ENCODE measurements at regions of chr1 and their contacts with region 1.

Region 1: DNA sequence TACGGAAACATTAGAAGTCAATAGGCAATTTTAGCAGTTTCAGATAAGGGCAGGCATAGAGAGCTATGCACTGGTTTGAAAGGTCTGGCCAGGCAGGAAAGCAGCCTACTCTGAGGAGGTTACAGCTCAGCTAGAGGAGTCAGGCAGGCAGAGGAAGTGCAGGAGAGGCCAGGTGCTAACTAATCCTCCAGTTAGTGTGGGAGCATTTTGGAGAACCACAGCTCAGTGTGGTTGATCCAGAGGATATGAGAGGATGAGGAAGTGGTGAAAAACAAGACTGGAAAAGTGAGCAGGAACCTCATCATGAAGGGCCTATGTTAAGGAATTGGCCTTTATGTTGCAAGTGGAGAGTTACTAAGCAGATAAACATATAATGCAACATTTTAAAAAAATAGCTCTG is 282.4 kb upstream of the SGIP1 start:
- DNase-seq: no peak
- H3K4me3 Mint-ChIP-seq: no peak overlapping the region
- H3K27ac Mint-ChIP-seq: peak overlapping the region; percentile 7
- H3K4me1 Mint-ChIP-seq: peaks cover 72% of the 10 kb centered on the region
- H3K27me3 Mint-ChIP-seq: no peaks in the 10 kb centered on the region

Region 2: GRCh38 chr1:66436378-66437145 is 185.0 kb after region 1 on chr1:
- CTCF ChIA-PET with region 1: interaction called, 21 read pairs
- POLR2A ChIA-PET with region 1: no interaction called
- DNase-seq: peak; percentile 43
- H3K4me3 Mint-ChIP-seq: no peak overlapping the region
- H3K27ac Mint-ChIP-seq: peak overlapping the region; percentile 76
- H3K4me1 Mint-ChIP-seq: peaks cover 38% of the 10 kb centered on the region
- H3K27me3 Mint-ChIP-seq: no peaks in the 10 kb centered on the region

Measured in activated CD4-positive, alpha-beta T cell treated with anti-CD3 and anti-CD28 coated beads, Interleukin-2, amount 10 ng/mL, durations not matched to agents 7 days and 5 days (primary cell).